ENCODE measurements at regions of chr16 and their contacts with region 1.

Region 1: DNA sequence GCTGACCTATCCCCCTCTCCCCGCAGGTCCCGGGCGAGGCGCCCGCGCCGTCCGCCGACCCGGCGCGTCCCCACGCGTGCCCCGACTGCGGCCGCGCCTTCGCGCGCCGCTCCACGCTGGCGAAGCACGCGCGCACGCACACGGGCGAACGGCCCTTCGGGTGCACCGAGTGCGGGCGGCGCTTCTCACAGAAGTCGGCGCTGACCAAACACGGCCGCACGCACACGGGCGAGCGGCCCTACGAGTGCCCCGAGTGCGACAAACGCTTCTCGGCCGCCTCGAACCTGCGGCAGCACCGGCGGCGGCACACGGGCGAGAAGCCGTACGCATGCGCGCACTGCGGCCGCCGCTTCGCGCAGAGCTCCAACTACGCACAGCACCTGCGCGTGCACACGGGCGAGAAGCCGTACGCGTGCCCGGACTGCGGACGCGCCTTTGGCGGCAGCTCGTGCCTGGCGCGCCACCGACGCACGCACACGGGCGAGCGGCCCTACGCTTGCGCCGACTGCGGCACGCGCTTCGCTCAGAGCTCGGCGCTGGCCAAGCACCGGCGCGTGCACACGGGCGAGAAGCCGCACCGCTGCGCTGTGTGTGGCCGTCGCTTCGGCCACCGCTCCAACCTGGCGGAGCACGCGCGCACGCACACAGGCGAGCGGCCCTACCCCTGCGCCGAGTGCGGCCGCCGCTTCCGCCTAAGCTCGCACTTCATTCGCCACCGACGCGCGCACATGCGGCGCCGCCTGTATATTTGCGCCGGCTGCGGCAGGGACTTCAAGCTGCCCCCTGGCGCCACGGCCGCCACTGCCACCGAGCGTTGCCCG is 10.3 kb downstream of the ZNF771 start:
- DNase-seq: peak; percentile 79
- CTCF ChIP-seq: peak; percentile 33

Region 2: DNA sequence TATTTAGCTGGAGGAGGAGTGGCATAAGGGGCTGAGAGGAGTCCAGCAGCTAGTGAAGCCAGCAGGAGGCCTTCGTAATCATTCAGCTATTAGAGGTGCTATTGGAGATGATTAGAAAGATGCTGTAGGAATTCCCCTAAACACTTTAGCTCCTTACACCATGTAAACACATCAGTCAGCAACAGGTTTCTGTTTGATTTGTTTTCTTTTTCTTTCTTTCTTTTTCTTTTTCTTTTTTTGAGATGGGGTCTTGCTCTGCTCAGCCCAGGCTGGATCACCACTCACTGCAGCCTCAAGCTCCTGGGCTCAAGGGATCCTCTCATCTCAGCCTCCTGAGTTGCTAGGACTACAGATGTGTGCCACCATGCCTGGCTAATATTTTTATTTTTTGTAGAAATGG is 38.6 kb after region 1 on chr16:
- CTCF ChIA-PET with region 1: no interaction called
- POLR2A ChIA-PET with region 1: no interaction called
- DNase-seq: peak; percentile 45
- CTCF ChIP-seq: no peak

Region 3: DNA sequence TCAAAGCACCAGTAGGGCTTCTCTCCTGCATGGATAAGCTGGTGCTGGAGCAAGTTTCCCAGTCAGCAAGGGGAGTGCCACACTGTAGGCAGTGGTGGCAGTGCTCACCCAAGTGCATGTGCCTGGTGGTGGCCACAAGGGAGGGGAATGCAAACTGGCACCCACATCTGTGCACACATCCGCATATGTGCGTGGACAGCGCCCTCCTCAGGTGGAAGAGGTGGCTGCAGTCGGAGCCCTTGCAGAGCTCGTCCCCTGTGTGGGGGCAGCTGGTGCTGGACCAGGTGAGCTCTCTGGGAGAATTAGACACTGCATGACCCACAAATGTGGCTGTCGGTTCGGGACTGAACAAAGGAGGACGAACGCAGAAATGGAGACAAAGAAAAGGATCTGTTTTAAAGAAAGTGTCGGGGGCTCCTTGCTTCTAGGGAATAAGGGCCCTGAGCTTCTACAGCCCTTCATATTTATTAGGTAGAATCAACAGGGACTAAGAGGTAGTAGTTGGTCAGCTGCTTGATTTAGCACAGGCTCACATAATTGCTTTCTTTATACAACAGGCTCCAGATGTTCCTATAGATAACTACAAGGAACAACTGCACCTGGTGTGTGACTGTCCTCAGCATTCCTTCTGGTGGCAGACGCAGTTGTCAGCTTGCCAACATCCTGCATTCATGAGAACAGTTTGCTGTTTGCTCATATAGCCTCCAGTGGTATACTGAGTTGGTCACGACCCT is 197.8 kb after region 1 on chr16:
- CTCF ChIA-PET with region 1: interaction called, 18 read pairs
- POLR2A ChIA-PET with region 1: no interaction called
- DNase-seq: peak; percentile 50
- CTCF ChIP-seq: peak; percentile 74

Measured in GM10248 (cell line).